CD8-positive, alpha-beta memory T cell (primary cell): ENCODE measurements at regions of chr17 and their contacts with region 1.

Region 1: GRCh38 chr17:50094753-50095619 is at the start of gene PDK2:
- DNase-seq: peak; percentile 93 to 98 (median 97)
- H3K4me3 ChIP-seq: peak within 1 kb of the TSS; percentile 100
- H3K4me3 Mint-ChIP-seq: peak within 1 kb of the TSS; percentile 88 to 100 (median 97)
- H3K27ac ChIP-seq: peak within 1 kb of the TSS; percentile 79
- H3K27ac Mint-ChIP-seq: peak within 1 kb of the TSS; percentile 88 to 98 (median 96)
- H3K4me1 ChIP-seq: peaks cover 17% of the 10 kb centered on the region
- H3K4me1 Mint-ChIP-seq: peaks cover 21 to 46% (median 27%) of the 10 kb centered on the region in 3 donors
- H3K27me3 ChIP-seq: no peaks in the 10 kb centered on the region
- H3K27me3 Mint-ChIP-seq: no peaks in the 10 kb centered on the region
- total RNA-seq, gene PDK2: 19.5 to 22.4 TPM

Region 2: DNA sequence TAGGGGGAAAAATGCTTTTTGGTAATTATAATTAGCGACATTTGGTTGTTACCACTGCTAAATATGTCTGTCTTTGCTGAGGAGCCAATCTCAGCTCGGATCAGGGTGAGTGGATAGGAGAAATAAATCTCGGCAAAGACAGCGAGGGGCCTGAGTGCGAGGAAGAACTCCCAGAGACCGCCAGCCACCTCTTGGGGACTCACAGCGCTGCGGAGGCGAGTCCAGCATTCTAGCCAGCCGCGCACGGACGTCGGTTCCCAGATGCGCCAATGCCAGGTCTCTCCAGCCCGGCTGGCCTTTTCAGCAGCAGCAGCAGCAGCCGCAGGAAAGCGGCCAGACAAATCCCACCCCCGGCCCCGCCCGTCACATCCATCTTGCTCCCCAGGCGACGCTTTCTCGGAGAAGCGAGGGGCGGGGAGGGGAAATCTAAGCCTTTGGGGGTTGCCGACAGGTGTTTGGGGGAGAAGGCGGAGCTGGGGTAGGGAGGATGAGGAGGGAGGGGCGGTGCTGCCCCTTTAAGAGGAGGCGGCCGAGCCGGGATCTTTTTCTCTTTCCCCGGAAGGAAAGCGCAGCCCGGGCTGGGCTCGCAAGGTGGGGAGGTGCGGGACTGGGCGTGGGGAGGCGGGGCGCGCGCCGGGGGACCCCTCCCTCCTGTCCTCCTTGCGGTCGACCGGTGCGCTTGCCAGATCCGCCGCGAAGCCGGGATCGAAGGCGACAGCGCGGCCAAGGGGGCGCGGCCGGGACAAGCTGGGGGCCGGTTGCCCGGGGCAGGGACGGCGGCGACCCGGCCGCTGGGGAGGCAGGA is 39.4 kb before region 1 on chr17 and contains the start of gene ITGA3:
- CTCF ChIA-PET with region 1: interaction called, 27 read pairs
- POLR2A ChIA-PET with region 1: interaction called, 3 read pairs
- DNase-seq: peak; percentile 40 to 73 (median 49)
- H3K4me3 ChIP-seq: peak within 1 kb of the TSS; percentile 72
- H3K4me3 Mint-ChIP-seq: peak within 1 kb of the TSS; percentile 87 to 97 (median 90)
- H3K27ac ChIP-seq: no peak within 1 kb of the TSS
- H3K27ac Mint-ChIP-seq: peak within 1 kb of the TSS; percentile 57 to 91 (median 84)
- H3K4me1 ChIP-seq: peaks cover 10% of the 10 kb centered on the region
- H3K4me1 Mint-ChIP-seq: peaks cover 21 to 38% (median 25%) of the 10 kb centered on the region in 3 donors
- H3K27me3 ChIP-seq: no peaks in the 10 kb centered on the region
- H3K27me3 Mint-ChIP-seq: no peaks in the 10 kb centered on the region
- total RNA-seq, gene ITGA3: 11.8 to 12.5 TPM

Region 3: DNA sequence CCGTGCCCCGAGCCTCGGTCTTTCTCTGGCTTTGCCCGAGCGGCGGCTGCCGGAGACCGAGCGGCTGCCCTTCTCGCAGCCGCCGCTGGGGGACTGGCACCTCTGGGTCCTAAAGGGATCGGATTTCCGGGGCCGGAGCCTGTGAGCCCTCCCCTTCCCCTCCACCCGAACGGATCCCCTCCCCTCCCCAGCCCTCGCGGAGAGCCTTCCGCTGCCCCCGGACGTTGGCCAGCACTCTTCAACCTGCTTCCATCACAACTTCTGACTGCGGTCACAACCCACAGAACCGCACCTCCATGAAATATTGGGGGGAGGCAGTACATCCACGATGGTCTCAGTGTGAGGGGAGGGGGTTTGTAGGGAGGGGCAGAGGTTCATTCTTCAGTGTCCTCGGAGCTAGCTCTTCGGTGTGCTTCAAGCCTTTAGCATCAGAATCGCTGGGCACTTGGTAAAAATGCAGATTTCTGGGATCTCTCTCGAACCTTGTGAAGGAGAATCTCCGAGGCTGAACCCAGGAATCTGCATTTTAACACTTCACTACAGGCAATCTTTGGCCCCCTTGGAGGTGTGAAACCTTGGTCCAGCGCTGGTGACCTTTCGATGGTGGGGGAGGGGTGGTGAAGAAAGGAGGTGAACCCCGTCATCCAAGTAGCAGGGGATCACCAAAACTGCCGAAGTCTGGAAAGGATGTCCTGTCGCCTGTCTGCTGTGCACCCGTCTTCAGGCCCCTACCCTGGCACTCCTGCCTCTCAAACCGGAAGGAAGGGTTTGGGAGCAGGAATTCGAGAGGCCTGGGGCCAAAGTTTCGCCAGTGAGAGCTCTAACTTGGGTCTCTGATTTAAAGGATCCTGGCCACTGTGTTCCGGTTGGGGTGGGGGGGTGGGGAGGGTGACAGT is 56.3 kb after region 1 on chr17:
- CTCF ChIA-PET with region 1: interaction called, 17 read pairs
- POLR2A ChIA-PET with region 1: interaction called, 5 read pairs
- DNase-seq: peak; percentile 80 to 89 (median 83)
- H3K4me3 ChIP-seq: peak overlapping the region; percentile 80
- H3K4me3 Mint-ChIP-seq: peak overlapping the region; percentile 86 to 100 (median 90)
- H3K27ac ChIP-seq: peak overlapping the region; percentile 79
- H3K27ac Mint-ChIP-seq: peak overlapping the region; percentile 75 to 99 (median 94)
- H3K4me1 ChIP-seq: peaks cover 53% of the 10 kb centered on the region
- H3K4me1 Mint-ChIP-seq: peaks cover 27 to 41% (median 34%) of the 10 kb centered on the region in 3 donors
- H3K27me3 ChIP-seq: no peaks in the 10 kb centered on the region
- H3K27me3 Mint-ChIP-seq: peaks cover 0 to 3% of the 10 kb centered on the region in 2 donors

Region 4: GRCh38 chr17:50169121-50169764 is 74.3 kb after region 1 on chr17:
- CTCF ChIA-PET with region 1: interaction called, 12 read pairs
- POLR2A ChIA-PET with region 1: interaction called, 4 read pairs
- DNase-seq: peak; percentile 44 to 82 (median 68)
- H3K4me3 ChIP-seq: peak overlapping the region; percentile 52
- H3K4me3 Mint-ChIP-seq: peak overlapping the region; percentile 47 to 88 (median 66)
- H3K27ac ChIP-seq: peak overlapping the region; percentile 11
- H3K27ac Mint-ChIP-seq: peak overlapping the region; percentile 59 to 90 (median 84)
- H3K4me1 ChIP-seq: peaks cover 15% of the 10 kb centered on the region
- H3K4me1 Mint-ChIP-seq: peaks cover 8 to 13% (median 11%) of the 10 kb centered on the region in 3 donors
- H3K27me3 ChIP-seq: no peaks in the 10 kb centered on the region
- H3K27me3 Mint-ChIP-seq: peaks cover 0 to 5% of the 10 kb centered on the region in 2 donors

Region 5: DNA sequence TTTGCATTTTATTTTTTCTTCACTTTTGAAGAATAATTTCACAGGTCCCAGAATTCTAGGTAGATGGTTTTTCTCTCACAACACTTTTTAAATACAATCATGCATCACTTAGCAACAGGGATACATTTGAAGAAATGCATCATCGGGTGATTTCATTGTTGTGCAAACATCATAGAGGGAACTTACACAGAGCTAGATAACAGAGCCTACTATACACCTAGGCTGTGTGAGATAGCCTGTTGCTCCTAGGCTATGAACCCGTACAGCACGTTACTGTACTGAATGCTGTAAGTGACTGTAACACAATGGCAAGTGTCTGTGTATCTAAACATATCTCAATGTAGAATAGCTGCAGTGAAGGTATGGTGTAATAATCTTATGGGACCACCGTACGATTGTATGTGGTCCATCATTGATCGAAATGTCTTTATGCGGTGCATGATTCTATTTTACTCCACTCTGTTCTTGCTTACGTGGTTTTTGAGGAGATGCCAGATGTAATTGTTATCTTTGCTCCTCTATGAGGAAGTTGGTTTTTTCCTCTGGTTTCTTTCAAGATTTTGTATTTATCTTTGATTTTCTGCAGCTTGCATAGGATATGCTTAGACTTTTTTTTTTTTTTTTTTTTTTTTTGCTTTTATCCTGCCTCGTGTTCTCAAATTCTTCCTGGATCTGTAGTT is 143.8 kb after region 1 on chr17:
- CTCF ChIA-PET with region 1: no interaction called
- POLR2A ChIA-PET with region 1: no interaction called
- DNase-seq: no peak
- H3K4me3 ChIP-seq: no peak overlapping the region
- H3K4me3 Mint-ChIP-seq: no peak overlapping the region
- H3K27ac ChIP-seq: no peak overlapping the region
- H3K27ac Mint-ChIP-seq: no peak overlapping the region
- H3K4me1 ChIP-seq: no peaks in the 10 kb centered on the region
- H3K4me1 Mint-ChIP-seq: no peaks in the 10 kb centered on the region
- H3K27me3 ChIP-seq: no peaks in the 10 kb centered on the region
- H3K27me3 Mint-ChIP-seq: peaks cover 17 to 64% of the 10 kb centered on the region in 2 donors

Region 6: DNA sequence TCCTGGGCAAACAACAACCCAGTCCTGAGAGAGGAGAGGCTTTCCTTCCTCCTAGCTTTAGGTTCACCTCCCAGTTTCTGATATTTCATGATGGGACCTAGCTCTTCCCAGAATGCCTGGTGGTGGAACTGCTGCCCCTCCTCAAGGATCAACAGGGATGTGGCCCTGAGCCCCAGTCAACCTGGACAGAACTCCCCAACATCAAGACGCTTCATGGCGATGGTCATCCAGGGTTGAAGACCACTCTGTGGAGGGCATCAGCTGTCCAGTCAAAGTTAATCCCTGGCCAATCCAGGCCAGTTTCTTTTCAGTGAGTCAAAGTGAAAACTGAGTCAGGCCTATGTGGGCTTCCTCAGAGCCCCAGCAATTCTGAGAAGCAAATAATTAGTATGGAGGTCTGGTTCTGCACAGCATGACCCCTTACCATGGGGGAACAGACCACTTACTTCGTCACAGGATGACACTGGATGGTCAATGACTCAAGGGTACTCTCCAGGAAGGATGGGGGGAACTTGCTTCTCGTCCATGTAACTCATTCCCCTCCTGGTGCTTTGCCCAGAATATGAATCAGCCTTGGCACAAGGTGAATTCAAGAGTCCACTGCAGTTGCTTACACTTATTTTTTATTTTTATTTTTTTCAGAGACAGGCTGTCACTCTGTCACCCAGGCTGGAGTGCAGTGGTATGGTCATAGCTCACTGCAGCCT is 236.3 kb after region 1 on chr17:
- CTCF ChIA-PET with region 1: no interaction called
- POLR2A ChIA-PET with region 1: no interaction called
- DNase-seq: no peak
- H3K4me3 ChIP-seq: no peak overlapping the region
- H3K4me3 Mint-ChIP-seq: no peak overlapping the region
- H3K27ac ChIP-seq: no peak overlapping the region
- H3K27ac Mint-ChIP-seq: no peak overlapping the region
- H3K4me1 ChIP-seq: no peaks in the 10 kb centered on the region
- H3K4me1 Mint-ChIP-seq: peaks cover 5 to 9% (median 8%) of the 10 kb centered on the region in 3 donors
- H3K27me3 ChIP-seq: no peaks in the 10 kb centered on the region
- H3K27me3 Mint-ChIP-seq: peaks cover 15 to 24% of the 10 kb centered on the region in 2 donors